ENCODE measurements at regions of chr22 and their contacts with region 1.

Region 1: DNA sequence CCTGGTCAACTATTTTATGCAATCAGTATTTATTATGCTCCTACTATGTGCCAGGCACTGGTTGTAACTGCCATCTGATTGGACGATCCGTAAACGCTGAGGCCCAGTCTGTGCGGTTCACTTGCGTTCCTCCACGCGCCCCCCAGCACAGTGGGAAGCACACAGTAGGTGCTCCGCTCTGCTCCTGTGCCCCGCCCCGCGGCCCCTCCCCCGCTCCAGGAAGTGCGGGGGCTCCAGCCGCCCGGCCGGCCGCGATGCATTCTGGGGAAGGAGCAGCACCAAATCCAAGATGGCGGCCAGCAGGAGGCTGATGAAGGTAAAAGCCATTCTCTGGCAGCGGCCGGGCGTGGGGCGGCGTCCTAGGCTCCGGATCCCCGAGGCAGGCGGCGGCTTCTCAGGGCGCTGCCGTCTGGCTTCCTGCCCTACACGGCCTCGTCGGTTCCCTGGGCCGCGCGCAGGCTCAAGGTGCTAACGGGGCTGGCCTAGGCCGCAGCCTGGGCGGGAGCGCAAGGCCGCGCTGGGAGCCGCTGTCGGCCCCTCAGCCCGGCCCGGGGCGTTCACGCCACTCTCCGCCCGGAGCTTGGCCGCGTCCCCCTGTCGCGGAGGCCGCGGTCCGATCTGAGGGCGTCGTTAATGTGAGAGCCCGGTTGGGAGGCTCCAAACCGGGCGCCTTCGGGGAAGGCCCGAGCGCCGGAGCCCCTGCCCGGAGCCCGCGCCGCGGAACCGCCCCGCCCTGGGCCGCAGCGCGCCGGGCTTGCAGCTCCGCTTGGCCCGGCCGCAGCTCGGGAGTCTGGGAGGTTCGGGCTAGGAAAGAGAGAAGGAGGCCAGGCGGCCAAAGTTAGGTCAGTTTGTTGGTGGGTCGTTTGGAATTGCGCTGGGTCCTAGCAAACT is at the start of gene UBE2L3:
- DNase-seq: peak; percentile 100
- ATAC-seq: peak; percentile 82
- H3K4me3 ChIP-seq: peak within 1 kb of the TSS; percentile 72
- H3K27ac ChIP-seq: peak within 1 kb of the TSS; percentile 93
- H3K4me1 ChIP-seq: peaks cover 35 to 39% of the 10 kb centered on the region in 2 experiments
- H3K27me3 ChIP-seq: no peaks in the 10 kb centered on the region
- CTCF ChIP-seq: peak in 1 of 3 experiments; percentile 25; a peak in 2 of 6 replicates
- EP300 ChIP-seq: peak; percentile 81
- POLR2A ChIP-seq: no peak
- RAD21 ChIP-seq: peak in 1 of 2 experiments; percentile 27; a peak in 1 of 4 replicates
- polyA plus RNA-seq, gene UBE2L3: 575 to 625 TPM

Region 2: GRCh38 chr22:21579518-21580147 is 11.9 kb after region 1 on chr22:
- CTCF ChIA-PET with region 1: interaction called, 3 read pairs
- POLR2A ChIA-PET with region 1: interaction called, 4,622 read pairs
- in situ Hi-C with region 1: no loop called
- intact Hi-C with region 1: no loop called
- DNase-seq: peak in 1 of 4 experiments; percentile 67
- ATAC-seq: peak; percentile 46
- H3K4me3 ChIP-seq: no peak overlapping the region
- H3K27ac ChIP-seq: no peak overlapping the region
- H3K4me1 ChIP-seq: peaks cover 11 to 17% of the 10 kb centered on the region in 2 experiments; a peak in 4 of 5 replicates
- H3K27me3 ChIP-seq: no peaks in the 10 kb centered on the region
- CTCF ChIP-seq: no peak
- EP300 ChIP-seq: no peak
- POLR2A ChIP-seq: no peak
- RAD21 ChIP-seq: no peak; a peak in 1 of 4 replicates

Region 3: GRCh38 chr22:21593406-21594232 is 25.9 kb after region 1 on chr22:
- CTCF ChIA-PET with region 1: no interaction called
- POLR2A ChIA-PET with region 1: interaction called, 4,622 read pairs
- in situ Hi-C with region 1: no loop called
- intact Hi-C with region 1: loop called (anchors 2 kb)
- DNase-seq: peak; percentile 87 to 92 (median 88)
- ATAC-seq: peak; percentile 89
- H3K4me3 ChIP-seq: no peak overlapping the region
- H3K27ac ChIP-seq: no peak overlapping the region
- H3K4me1 ChIP-seq: peaks cover 7 to 12% of the 10 kb centered on the region in 2 experiments; a peak in 4 of 5 replicates
- H3K27me3 ChIP-seq: no peaks in the 10 kb centered on the region; a peak in 1 of 5 replicates
- CTCF ChIP-seq: peak; percentile 96 to 100 (median 98)
- EP300 ChIP-seq: 0 out of 2 replicates have a peak, but pooled peaks have one; percentile 7
- POLR2A ChIP-seq: no peak
- RAD21 ChIP-seq: peak; percentile 53 to 97; a peak in 3 of 4 replicates

Region 4: DNA sequence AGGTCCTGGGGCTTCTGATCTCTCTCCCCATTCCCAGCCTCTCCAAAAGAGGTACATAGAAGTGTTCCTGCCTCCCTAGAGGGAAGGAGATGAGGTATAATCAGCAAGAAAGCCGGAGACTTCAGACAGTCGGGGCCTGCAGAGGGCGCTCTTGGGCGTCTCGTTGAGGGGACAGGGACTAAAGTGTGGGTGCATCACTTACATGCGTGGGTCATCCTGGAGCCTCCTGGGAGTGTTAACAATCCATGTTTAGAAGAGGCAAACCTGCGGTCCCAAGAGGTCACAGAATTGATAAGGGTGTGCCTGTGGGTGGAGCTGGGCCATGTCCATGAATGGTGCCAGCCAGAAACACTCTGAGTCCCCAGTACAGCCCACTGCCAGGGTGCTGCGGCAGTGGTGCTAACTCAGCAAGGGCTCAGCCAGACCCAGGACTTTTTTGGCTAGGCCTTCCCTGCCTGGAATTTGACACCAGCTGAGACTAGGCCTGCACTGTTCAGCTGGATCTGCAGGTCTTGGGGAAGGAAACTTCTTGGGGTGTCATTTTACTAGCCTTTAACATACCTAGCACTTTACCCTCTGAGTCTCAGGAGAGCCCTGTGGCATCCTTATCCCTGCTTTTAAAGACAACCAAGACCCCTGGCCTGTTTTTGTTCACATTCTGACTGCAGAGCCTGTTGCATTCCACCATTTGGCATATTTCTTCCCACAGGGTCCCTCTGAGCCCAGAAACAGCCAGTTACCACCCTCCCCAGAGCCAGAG is 56.6 kb after region 1 on chr22:
- CTCF ChIA-PET with region 1: no interaction called
- POLR2A ChIA-PET with region 1: interaction called, 4,622 read pairs
- in situ Hi-C with region 1: no loop called
- intact Hi-C with region 1: loop called (anchors 2 kb)
- DNase-seq: peak; percentile 90 to 97 (median 94)
- ATAC-seq: peak; percentile 53
- H3K4me3 ChIP-seq: no peak overlapping the region
- H3K27ac ChIP-seq: peak overlapping the region; percentile 4; the same call in 2 of the 3 replicates
- H3K4me1 ChIP-seq: peaks cover 38 to 69% of the 10 kb centered on the region in 2 experiments
- H3K27me3 ChIP-seq: no peaks in the 10 kb centered on the region
- CTCF ChIP-seq: peak in 1 of 3 experiments; percentile 99; a peak in 2 of 6 replicates
- EP300 ChIP-seq: peak; percentile 57
- POLR2A ChIP-seq: no peak
- RAD21 ChIP-seq: no peak

Region 5: GRCh38 chr22:21634844-21635243 is 67.1 kb after region 1 on chr22:
- CTCF ChIA-PET with region 1: no interaction called
- POLR2A ChIA-PET with region 1: interaction called, 4,622 read pairs
- in situ Hi-C with region 1: no loop called
- intact Hi-C with region 1: no loop called
- DNase-seq: no peak
- ATAC-seq: no peak
- H3K4me3 ChIP-seq: no peak overlapping the region
- H3K27ac ChIP-seq: no peak overlapping the region
- H3K4me1 ChIP-seq: peaks cover 32 to 78% of the 10 kb centered on the region in 2 experiments; a peak in 4 of 5 replicates
- H3K27me3 ChIP-seq: no peaks in the 10 kb centered on the region
- CTCF ChIP-seq: 0 out of 6 replicates have a peak, but pooled peaks of 1 of the 3 experiments have one; percentile 3
- EP300 ChIP-seq: no peak
- POLR2A ChIP-seq: no peak
- RAD21 ChIP-seq: no peak

Region 6: DNA sequence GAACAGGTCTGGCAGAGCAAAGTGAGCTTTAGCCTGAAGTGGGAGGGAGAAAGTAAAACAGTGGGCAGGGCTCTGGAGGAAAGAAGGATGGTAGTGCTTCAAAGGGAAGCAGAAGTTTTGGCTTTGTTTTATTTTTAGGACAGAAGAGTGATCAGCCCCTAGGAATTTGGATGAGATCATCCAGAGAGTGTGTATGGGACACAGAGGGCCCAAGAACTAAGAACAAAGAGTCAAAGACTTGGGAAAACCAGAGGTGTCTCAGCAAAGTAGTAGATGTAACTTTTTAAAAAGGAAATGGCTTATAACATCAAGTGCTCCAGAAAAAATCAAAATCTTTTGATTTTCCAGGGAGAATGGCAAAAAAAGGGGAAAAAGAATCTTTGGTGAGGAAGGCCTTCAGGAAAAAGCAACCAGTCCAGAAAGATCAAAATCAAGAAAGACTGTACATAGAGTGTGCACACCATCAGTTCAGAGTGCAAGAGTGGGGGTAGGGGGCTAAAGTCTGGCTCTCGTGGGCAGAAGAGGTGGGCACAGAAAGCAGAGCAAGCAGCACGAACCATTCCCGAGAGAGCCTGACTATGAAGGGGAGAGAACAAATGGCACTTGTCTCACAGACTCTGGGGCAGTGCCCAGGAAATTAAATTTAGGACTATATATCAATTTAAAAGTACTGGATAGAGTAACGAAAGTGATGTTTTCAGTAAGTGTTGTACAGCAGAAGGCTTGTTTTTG is 269.7 kb after region 1 on chr22:
- CTCF ChIA-PET with region 1: no interaction called
- POLR2A ChIA-PET with region 1: no interaction called
- in situ Hi-C with region 1: no loop called
- intact Hi-C with region 1: no loop called
- DNase-seq: peak in 1 of 4 experiments; percentile 73
- ATAC-seq: peak; percentile 16
- H3K4me3 ChIP-seq: no peak overlapping the region
- H3K27ac ChIP-seq: no peak overlapping the region
- H3K4me1 ChIP-seq: peaks cover 21% of the 10 kb centered on the region in 2 experiments
- H3K27me3 ChIP-seq: no peaks in the 10 kb centered on the region
- CTCF ChIP-seq: no peak
- EP300 ChIP-seq: no peak
- POLR2A ChIP-seq: no peak
- RAD21 ChIP-seq: no peak